PC-3 (cell line): ENCODE measurements at regions of chr4 and their contacts with region 1.

Region 1: GRCh38 chr4:118981839-118982381 is 93.3 kb downstream of the SYNPO2 start:
- DNase-seq: peak; percentile 76
- ATAC-seq: peak; percentile 76
- H3K4me3 ChIP-seq: no peak overlapping the region
- H3K27ac ChIP-seq: no peak overlapping the region
- H3K4me1 ChIP-seq: peaks cover 9% of the 10 kb centered on the region
- H3K27me3 ChIP-seq: no peaks in the 10 kb centered on the region
- CTCF ChIP-seq: peak; percentile 84

Region 2: GRCh38 chr4:118997601-118998000 is 15.7 kb after region 1 on chr4:
- CTCF ChIA-PET with region 1: no interaction called
- POLR2A ChIA-PET with region 1: no interaction called
- intact Hi-C with region 1: no loop called
- DNase-seq: no peak
- ATAC-seq: no peak
- H3K4me3 ChIP-seq: no peak overlapping the region
- H3K27ac ChIP-seq: no peak overlapping the region
- H3K4me1 ChIP-seq: no peaks in the 10 kb centered on the region
- H3K27me3 ChIP-seq: no peaks in the 10 kb centered on the region
- CTCF ChIP-seq: no peak

Region 3: DNA sequence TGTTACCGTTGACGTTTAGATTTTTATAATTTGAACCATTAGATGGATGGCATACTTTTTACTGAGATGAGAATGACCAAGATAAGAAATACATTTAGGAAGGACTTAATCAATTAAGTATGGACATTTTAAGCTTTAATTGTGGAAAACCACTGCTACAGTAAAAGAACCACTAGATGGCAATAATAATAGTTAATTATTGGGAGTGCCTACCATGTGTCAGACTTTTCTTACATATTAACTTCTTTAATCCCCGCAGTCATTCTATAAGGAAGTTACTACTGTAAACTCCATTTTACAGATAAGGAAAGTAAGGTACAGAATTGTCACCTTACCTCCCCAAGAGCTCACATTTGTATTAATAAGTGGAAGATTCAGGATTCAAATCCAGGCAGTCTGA is 105.2 kb after region 1 on chr4:
- CTCF ChIA-PET with region 1: interaction called, 3 read pairs
- POLR2A ChIA-PET with region 1: no interaction called
- intact Hi-C with region 1: loop called (anchors 10 kb)
- DNase-seq: peak; percentile 2
- ATAC-seq: 0 out of 2 replicates have a peak, but pooled peaks have one; percentile 24
- H3K4me3 ChIP-seq: no peak overlapping the region
- H3K27ac ChIP-seq: no peak overlapping the region
- H3K4me1 ChIP-seq: no peaks in the 10 kb centered on the region
- H3K27me3 ChIP-seq: no peaks in the 10 kb centered on the region
- CTCF ChIP-seq: peak; percentile 44; the same call in 1 of the 2 replicates

Region 4: DNA sequence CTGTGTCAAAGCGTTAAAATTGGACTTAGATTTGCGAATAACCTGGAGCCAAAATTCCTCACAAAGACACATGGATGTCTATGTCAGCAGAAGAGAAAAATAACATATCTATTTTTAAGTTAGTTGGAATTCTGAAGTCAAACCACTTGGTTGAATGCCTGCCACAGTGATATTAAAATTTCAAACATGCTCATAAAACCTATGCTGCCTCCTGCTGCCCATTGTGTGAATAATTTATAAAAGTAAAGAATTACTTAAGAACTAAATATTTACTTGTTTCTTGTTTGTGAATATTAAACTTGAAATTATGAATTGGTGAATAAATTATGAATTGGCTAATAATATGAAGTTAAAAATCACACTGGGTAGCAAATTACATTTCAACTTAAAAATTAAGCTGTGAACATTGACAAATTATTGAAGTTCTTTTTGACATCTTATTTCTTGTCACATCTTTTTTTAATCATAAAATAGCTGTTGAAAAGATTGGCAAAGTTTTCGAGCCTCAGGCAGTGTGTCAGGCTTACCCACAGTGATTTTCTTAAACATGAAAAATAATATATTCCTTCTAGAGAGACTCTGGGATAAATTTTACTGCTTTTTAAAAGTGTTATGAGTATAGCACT is 304.6 kb after region 1 on chr4:
- CTCF ChIA-PET with region 1: no interaction called
- POLR2A ChIA-PET with region 1: no interaction called
- intact Hi-C with region 1: loop called (anchors 1 kb)
- DNase-seq: peak; percentile 62
- ATAC-seq: no peak
- H3K4me3 ChIP-seq: no peak overlapping the region
- H3K27ac ChIP-seq: no peak overlapping the region
- H3K4me1 ChIP-seq: 0 out of 2 replicates have a peak, but pooled peaks cover 7% of the 10 kb centered on the region
- H3K27me3 ChIP-seq: no peaks in the 10 kb centered on the region
- CTCF ChIP-seq: peak; percentile 65

Region 5: GRCh38 chr4:119490335-119490734 is 508.4 kb after region 1 on chr4:
- CTCF ChIA-PET with region 1: no interaction called
- POLR2A ChIA-PET with region 1: no interaction called
- intact Hi-C with region 1: loop called (anchors 5 kb)
- DNase-seq: peak; percentile 32
- ATAC-seq: peak; percentile 42; the same call in 1 of the 2 replicates
- H3K4me3 ChIP-seq: no peak overlapping the region
- H3K27ac ChIP-seq: no peak overlapping the region
- H3K4me1 ChIP-seq: no peaks in the 10 kb centered on the region
- H3K27me3 ChIP-seq: no peaks in the 10 kb centered on the region
- CTCF ChIP-seq: peak; percentile 32; the same call in 1 of the 2 replicates